Heart left ventricle (tissue), 16 donors: ENCODE measurements at regions of chr13 and their contacts with region 1.

Region 1: DNA sequence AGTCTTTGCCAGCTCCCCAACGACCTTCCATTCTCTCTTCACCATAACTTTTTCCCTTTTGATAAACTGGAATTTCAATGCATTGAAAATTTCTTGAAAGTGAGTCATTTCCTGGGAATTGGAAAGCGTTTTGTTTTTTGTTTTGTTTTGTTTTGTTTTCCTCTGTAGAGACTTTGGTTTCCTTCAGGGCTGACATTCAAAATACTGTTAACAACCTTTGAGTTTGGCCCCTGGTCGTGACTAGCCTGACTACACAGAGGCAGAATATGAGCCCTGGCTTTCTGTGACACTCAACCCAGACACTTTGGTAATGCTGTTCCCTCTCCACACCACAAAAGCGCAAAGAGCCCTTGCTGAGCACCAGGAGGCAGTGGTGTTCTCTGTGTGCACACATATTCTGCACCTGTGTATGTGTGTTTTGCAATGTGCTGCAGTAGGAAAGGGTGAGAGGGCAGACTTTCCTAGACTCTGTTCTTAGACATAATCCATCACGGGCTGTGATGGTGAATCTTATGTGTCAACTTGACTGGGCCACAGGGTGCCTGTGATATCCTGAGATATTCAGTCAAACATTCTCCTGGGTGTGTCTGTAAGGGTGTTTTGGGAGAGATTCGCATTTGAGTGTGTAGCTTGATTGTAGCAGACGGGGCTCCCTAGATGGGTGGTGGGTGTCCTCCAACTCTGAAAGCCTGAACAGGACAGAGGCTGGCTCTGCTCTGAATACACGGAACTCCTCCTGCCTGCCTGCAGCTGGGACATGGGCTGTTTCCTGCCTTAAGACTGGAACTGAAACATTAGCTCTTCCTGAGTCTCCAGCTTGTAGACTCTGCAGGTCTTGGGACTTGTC is 29.5 kb upstream of the ANKRD10 start:
- DNase-seq: peak in 1 of 5 donors; percentile 30
- ATAC-seq: peak in 3 of 4 donors; percentile 70 to 82 (median 76)
- H3K4me3 ChIP-seq: no peak overlapping the region
- H3K27ac ChIP-seq: peak overlapping the region in 8 of 12 donors; percentile 29 to 61 (median 44)
- H3K4me1 ChIP-seq: peaks cover 0 to 19% (median 6%) of the 10 kb centered on the region in 12 donors
- H3K27me3 ChIP-seq: no peaks in the 10 kb centered on the region
- CTCF ChIP-seq: peak; percentile 12 to 64 (median 39)
- POLR2A ChIP-seq: no peak

Region 2: GRCh38 chr13:111006506-111007031 is 62.2 kb after region 1 on chr13:
- intact Hi-C with region 1: loop called in 1 of 10 experiments (anchors 10 kb)
- DNase-seq: peak; percentile 84 to 92 (median 88)
- ATAC-seq: peak; percentile 93 to 97 (median 96)
- H3K4me3 ChIP-seq: peak overlapping the region in 4 of 12 donors; percentile 1 to 15 (median 5)
- H3K27ac ChIP-seq: peak overlapping the region; percentile 70 to 93 (median 88)
- H3K4me1 ChIP-seq: peaks cover 3 to 37% (median 23%) of the 10 kb centered on the region in 12 donors
- H3K27me3 ChIP-seq: no peaks in the 10 kb centered on the region
- CTCF ChIP-seq: no peak
- POLR2A ChIP-seq: no peak

Region 3: GRCh38 chr13:111046590-111047141 is 102.3 kb after region 1 on chr13:
- intact Hi-C with region 1: loop called in 5 of 10 experiments (anchors 5 to 10 kb)
- DNase-seq: peak in 4 of 5 donors; percentile 48 to 59 (median 56)
- ATAC-seq: peak; percentile 39 to 79 (median 66)
- H3K4me3 ChIP-seq: no peak overlapping the region
- H3K27ac ChIP-seq: peak overlapping the region in 6 of 12 donors; percentile 32 to 71 (median 62)
- H3K4me1 ChIP-seq: peaks cover 0 to 20% (median 7%) of the 10 kb centered on the region in 12 donors
- H3K27me3 ChIP-seq: no peaks in the 10 kb centered on the region
- CTCF ChIP-seq: peak in 8 of 12 donors; percentile 12 to 38 (median 26)
- POLR2A ChIP-seq: no peak

Region 4: DNA sequence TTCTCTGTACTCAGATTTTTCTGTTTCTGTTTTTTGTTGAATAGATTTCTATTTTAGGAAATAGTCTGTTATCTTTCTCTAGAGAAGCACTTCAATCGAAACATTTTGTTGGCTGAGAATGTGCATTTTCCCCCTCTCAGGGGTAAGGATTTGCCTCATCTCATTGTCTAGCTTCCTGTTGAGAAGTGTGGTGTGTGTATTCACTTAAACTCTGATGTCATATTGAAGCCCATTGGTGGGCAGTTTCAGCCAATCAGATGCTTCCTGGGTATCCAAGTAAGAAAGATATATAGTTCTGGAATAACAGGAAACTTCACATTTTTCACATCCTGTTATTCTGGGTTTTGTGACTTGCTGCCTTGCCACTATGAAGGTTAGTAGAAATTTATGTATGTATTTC is 258.4 kb after region 1 on chr13:
- intact Hi-C with region 1: loop called in 1 of 10 experiments (anchors 10 kb)
- DNase-seq: peak in 3 of 5 donors; percentile 45 to 73 (median 62)
- ATAC-seq: peak; percentile 66 to 90 (median 80)
- H3K4me3 ChIP-seq: peak overlapping the region in 11 of 12 donors; percentile 22 to 65 (median 51)
- H3K27ac ChIP-seq: peak overlapping the region; percentile 56 to 89 (median 79)
- H3K4me1 ChIP-seq: peaks cover 13 to 77% (median 52%) of the 10 kb centered on the region in 12 donors
- H3K27me3 ChIP-seq: no peaks in the 10 kb centered on the region
- CTCF ChIP-seq: no peak
- POLR2A ChIP-seq: peak in 1 of 2 donors; percentile 24